PC-9 (cell line): ENCODE measurements at regions of chr9 and their contacts with region 1.

Region 1: DNA sequence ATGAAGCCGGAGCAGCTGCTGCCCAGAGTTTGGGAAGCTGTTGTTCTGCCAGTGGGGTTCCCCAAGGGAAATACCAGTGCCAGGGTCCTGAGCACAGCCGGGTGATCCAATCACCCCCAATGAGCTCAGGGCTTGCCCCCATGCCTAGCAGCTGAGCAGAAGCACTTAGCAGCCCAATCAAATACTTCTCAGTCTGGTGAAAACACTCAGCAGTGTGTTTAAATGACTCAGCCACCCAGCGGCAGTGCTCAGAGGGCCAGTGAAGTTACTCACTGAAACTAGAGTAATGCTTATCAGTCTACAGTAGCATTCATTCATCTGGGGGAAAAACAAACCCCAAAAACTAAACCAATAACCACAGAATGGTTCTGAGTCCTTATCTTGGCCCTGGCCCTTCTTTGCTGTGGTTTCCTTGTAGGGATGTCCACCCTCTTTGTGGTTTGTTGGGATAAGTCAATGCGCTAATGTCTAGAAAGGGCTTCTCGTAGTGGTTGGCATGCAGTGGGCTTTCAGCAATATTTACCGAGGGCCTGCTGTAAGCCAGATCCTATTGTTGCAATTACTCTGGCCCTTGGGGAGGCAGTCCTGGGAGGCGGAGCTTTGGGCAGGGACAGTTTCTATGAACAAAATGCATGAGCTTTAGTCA is 43.1 kb downstream of the LHX2 start:
- DNase-seq: peak; percentile 73 to 94
- H3K4me3 ChIP-seq: no peak overlapping the region
- H3K27ac ChIP-seq: peak overlapping the region; percentile 44
- H3K4me1 ChIP-seq: peaks cover 15% of the 10 kb centered on the region
- H3K27me3 ChIP-seq: peaks cover 44% of the 10 kb centered on the region
- CTCF ChIP-seq: no peak

Region 2: GRCh38 chr9:123742009-123742767 is 312.5 kb before region 1 on chr9:
- CTCF ChIA-PET with region 1: no interaction called
- POLR2A ChIA-PET with region 1: no interaction called
- intact Hi-C with region 1: no loop called
- DNase-seq: no peak
- H3K4me3 ChIP-seq: no peak overlapping the region
- H3K27ac ChIP-seq: no peak overlapping the region
- H3K4me1 ChIP-seq: no peaks in the 10 kb centered on the region
- H3K27me3 ChIP-seq: no peaks in the 10 kb centered on the region
- CTCF ChIP-seq: no peak

Region 3: GRCh38 chr9:124079176-124079925 is 24.6 kb after region 1 on chr9:
- CTCF ChIA-PET with region 1: no interaction called
- POLR2A ChIA-PET with region 1: interaction called, 4 read pairs
- intact Hi-C with region 1: loop called (anchors 2 kb)
- DNase-seq: peak; percentile 58 to 84
- H3K4me3 ChIP-seq: no peak overlapping the region
- H3K27ac ChIP-seq: peak overlapping the region; percentile 70
- H3K4me1 ChIP-seq: peaks cover 25% of the 10 kb centered on the region
- H3K27me3 ChIP-seq: peaks cover 9% of the 10 kb centered on the region; the same call in 1 of the 2 replicates
- CTCF ChIP-seq: no peak

Region 4: GRCh38 chr9:124327491-124327890 is 272.8 kb after region 1 on chr9:
- CTCF ChIA-PET with region 1: interaction called, 12 read pairs
- POLR2A ChIA-PET with region 1: no interaction called
- intact Hi-C with region 1: no loop called
- DNase-seq: no peak
- H3K4me3 ChIP-seq: no peak overlapping the region
- H3K27ac ChIP-seq: no peak overlapping the region
- H3K4me1 ChIP-seq: no peaks in the 10 kb centered on the region
- H3K27me3 ChIP-seq: no peaks in the 10 kb centered on the region
- CTCF ChIP-seq: no peak